ENCODE measurements at regions of chr4 and their contacts with region 1.

Region 1: DNA sequence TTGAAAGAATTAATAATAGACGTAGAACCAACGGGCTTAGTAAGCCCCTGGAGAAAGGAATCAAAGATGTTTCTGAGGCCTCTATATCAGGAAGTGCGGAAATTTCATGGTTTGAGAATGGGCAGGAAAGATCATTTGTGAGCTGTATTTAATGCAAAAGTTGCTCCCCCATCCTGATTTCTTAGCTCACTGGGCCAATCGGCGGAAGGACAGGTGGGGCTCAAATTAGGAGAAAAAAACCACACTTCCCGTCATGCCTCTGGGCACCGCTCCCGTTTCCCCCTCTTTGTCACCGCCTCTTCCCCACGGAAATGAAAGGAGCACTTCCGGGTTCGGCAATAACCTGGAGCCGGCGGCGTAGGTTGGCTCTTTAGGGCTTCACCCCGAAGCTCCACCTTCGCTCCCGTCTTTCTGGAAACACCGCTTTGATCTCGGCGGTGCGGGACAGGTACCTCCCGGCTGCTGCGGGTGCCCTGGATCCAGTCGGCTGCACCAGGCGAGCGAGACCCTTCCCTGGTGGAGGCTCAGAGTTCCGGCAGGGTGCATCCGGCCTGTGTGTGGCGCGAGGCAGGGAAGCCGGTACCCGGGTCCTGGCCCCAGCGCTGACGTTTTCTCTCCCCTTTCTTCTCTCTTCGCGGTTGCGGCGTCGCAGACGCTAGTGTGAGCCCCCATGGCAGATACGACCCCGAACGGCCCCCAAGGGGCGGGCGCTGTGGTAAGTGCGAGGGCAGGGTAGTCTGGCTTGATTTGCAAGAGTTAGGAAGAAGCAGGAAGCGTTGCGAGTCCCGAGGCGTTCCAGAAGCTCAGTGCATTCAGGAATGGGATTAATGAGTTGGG is at the start of gene TMEM33:
- DNase-seq: peak; percentile 79
- H3K4me3 Mint-ChIP-seq: peak within 1 kb of the TSS; percentile 93
- H3K27ac Mint-ChIP-seq: peak within 1 kb of the TSS; percentile 82
- H3K4me1 Mint-ChIP-seq: peaks cover 56% of the 10 kb centered on the region
- H3K27me3 Mint-ChIP-seq: no peaks in the 10 kb centered on the region
- total RNA-seq, gene TMEM33: 53.3 to 55.9 TPM

Region 2: GRCh38 chr4:41718907-41719306 is 216.1 kb before region 1 on chr4:
- CTCF ChIA-PET with region 1: no interaction called
- POLR2A ChIA-PET with region 1: no interaction called
- DNase-seq: no peak
- H3K4me3 Mint-ChIP-seq: no peak overlapping the region
- H3K27ac Mint-ChIP-seq: no peak overlapping the region
- H3K4me1 Mint-ChIP-seq: no peaks in the 10 kb centered on the region
- H3K27me3 Mint-ChIP-seq: no peaks in the 10 kb centered on the region

Region 3: GRCh38 chr4:41857226-41857641 is 77.8 kb before region 1 on chr4:
- CTCF ChIA-PET with region 1: no interaction called
- POLR2A ChIA-PET with region 1: no interaction called
- DNase-seq: no peak
- H3K4me3 Mint-ChIP-seq: no peak overlapping the region
- H3K27ac Mint-ChIP-seq: no peak overlapping the region
- H3K4me1 Mint-ChIP-seq: no peaks in the 10 kb centered on the region
- H3K27me3 Mint-ChIP-seq: peaks cover 29% of the 10 kb centered on the region

Region 4: DNA sequence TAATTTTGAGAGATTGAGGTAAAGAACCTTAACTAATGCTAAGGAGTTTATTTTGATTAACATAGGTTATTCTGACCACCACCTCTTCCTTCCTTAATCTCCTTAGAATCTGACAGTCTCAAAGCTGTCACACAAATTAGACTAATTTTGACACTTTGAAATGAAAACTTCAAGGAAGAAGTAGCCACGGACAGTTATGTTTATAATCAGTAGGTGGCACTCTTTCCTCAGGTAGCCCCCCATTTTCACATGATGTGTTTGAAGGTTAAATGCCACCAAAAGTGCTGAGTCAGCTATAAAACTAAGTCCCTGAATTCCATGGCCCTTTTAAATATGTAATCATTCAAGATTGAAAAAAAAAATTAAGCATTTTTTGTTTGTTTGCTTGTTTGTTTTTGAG is 22.6 kb after region 1 on chr4:
- CTCF ChIA-PET with region 1: interaction called, 8 read pairs
- POLR2A ChIA-PET with region 1: interaction called, 11 read pairs
- DNase-seq: no peak
- H3K4me3 Mint-ChIP-seq: no peak overlapping the region
- H3K27ac Mint-ChIP-seq: no peak overlapping the region
- H3K4me1 Mint-ChIP-seq: no peaks in the 10 kb centered on the region
- H3K27me3 Mint-ChIP-seq: no peaks in the 10 kb centered on the region

Region 5: GRCh38 chr4:41990365-41991111 is 55.5 kb after region 1 on chr4 and contains the start of gene SLC30A9:
- CTCF ChIA-PET with region 1: no interaction called
- POLR2A ChIA-PET with region 1: interaction called, 12 read pairs
- DNase-seq: peak; percentile 94
- H3K4me3 Mint-ChIP-seq: peak within 1 kb of the TSS; percentile 98
- H3K27ac Mint-ChIP-seq: peak within 1 kb of the TSS; percentile 88
- H3K4me1 Mint-ChIP-seq: peaks cover 31% of the 10 kb centered on the region
- H3K27me3 Mint-ChIP-seq: no peaks in the 10 kb centered on the region
- total RNA-seq, gene SLC30A9: 33.2 to 34.3 TPM

Measured in activated CD4-positive, alpha-beta memory T cell treated with anti-CD3 and anti-CD28 coated beads, Interleukin-2, amount 10 ng/mL, durations not matched to agents 7 days and 5 days (primary cell).